ENCODE measurements at regions of chr4 and their contacts with region 1.

Region 1: GRCh38 chr4:155787113-155787710 is 28.4 kb downstream of the GUCY1B1 start:
- DNase-seq: no peak
- ATAC-seq: peak; percentile 99
- H3K4me3 Mint-ChIP-seq: no peak overlapping the region
- H3K27ac Mint-ChIP-seq: no peak overlapping the region
- H3K4me1 Mint-ChIP-seq: peaks cover 8% of the 10 kb centered on the region
- H3K27me3 Mint-ChIP-seq: no peaks in the 10 kb centered on the region; the same call in 1 of the 2 replicates
- CTCF ChIP-seq: peak; percentile 50; the same call in 1 of the 2 replicates

Region 2: GRCh38 chr4:155529272-155529671 is 257.9 kb before region 1 on chr4:
- CTCF ChIA-PET with region 1: interaction called, 21 read pairs
- POLR2A ChIA-PET with region 1: no interaction called
- DNase-seq: peak; percentile 29
- ATAC-seq: peak; percentile 80
- H3K4me3 Mint-ChIP-seq: no peak overlapping the region
- H3K27ac Mint-ChIP-seq: no peak overlapping the region
- H3K4me1 Mint-ChIP-seq: 0 out of 2 replicates have a peak, but pooled peaks cover 5% of the 10 kb centered on the region
- H3K27me3 Mint-ChIP-seq: no peaks in the 10 kb centered on the region
- CTCF ChIP-seq: 0 out of 2 replicates have a peak, but pooled peaks have one; percentile 20

Region 3: GRCh38 chr4:155657169-155657568 is 130.0 kb before region 1 on chr4:
- CTCF ChIA-PET with region 1: no interaction called
- POLR2A ChIA-PET with region 1: no interaction called
- DNase-seq: no peak
- ATAC-seq: no peak
- H3K4me3 Mint-ChIP-seq: no peak overlapping the region
- H3K27ac Mint-ChIP-seq: no peak overlapping the region
- H3K4me1 Mint-ChIP-seq: peaks cover 16% of the 10 kb centered on the region
- H3K27me3 Mint-ChIP-seq: peaks cover 3% of the 10 kb centered on the region
- CTCF ChIP-seq: no peak

Region 4: DNA sequence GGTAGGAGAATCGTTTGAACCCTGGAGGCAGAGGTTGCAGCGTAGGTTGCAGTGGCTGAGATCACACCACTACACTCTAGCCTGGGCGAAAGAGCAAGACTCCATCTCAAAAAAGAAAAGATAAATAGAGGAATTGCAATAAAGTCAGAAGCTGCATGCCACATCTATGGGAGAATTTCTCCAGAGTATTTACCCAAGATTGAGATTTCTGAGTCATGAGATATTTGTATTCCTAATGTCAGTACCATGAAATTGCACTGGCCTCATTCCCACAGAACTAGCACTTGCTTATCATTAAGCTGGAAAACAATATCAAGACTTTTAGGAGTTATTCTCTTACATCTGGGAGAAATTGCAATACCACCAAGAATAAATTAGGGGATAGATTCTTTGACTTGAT is 41.4 kb after region 1 on chr4:
- CTCF ChIA-PET with region 1: no interaction called
- POLR2A ChIA-PET with region 1: no interaction called
- DNase-seq: no peak
- ATAC-seq: no peak
- H3K4me3 Mint-ChIP-seq: no peak overlapping the region
- H3K27ac Mint-ChIP-seq: no peak overlapping the region
- H3K4me1 Mint-ChIP-seq: peaks cover 4% of the 10 kb centered on the region; the same call in 1 of the 2 replicates
- H3K27me3 Mint-ChIP-seq: no peaks in the 10 kb centered on the region
- CTCF ChIP-seq: no peak

Measured in WTC11 (cell line).